ENCODE measurements at regions of chr5 and their contacts with region 1.

Region 1: GRCh38 chr5:39074016-39074886 is at the start of gene RICTOR:
- DNase-seq: peak; percentile 85 to 94 (median 91)
- ATAC-seq: peak; percentile 71
- H3K4me3 ChIP-seq: peak within 1 kb of the TSS; percentile 81 to 95
- H3K4me3 Mint-ChIP-seq: peak within 1 kb of the TSS; percentile 97
- H3K27ac ChIP-seq: peak within 1 kb of the TSS; percentile 92 to 94
- H3K27ac Mint-ChIP-seq: peak within 1 kb of the TSS; percentile 96
- H3K4me1 ChIP-seq: peaks cover 36% of the 10 kb centered on the region
- H3K4me1 Mint-ChIP-seq: peaks cover 46% of the 10 kb centered on the region
- H3K27me3 ChIP-seq: peaks cover 10 to 11% of the 10 kb centered on the region in 2 experiments
- H3K27me3 Mint-ChIP-seq: peaks cover 25% of the 10 kb centered on the region
- CTCF ChIP-seq: no peak
- total RNA-seq, gene RICTOR: 116 to 128 TPM

Region 2: GRCh38 chr5:37370864-37371726 is 1703.2 kb before region 1 on chr5 and contains the start of gene NUP155:
- CTCF ChIA-PET with region 1: no interaction called
- POLR2A ChIA-PET with region 1: no interaction called
- intact Hi-C with region 1: loop called in 1 of 2 experiments (anchors 10 kb)
- DNase-seq: peak; percentile 71 to 96 (median 88)
- ATAC-seq: peak; percentile 93
- H3K4me3 ChIP-seq: peak within 1 kb of the TSS; percentile 92 to 95
- H3K4me3 Mint-ChIP-seq: peak within 1 kb of the TSS; percentile 97
- H3K27ac ChIP-seq: peak within 1 kb of the TSS; percentile 88 to 93
- H3K27ac Mint-ChIP-seq: peak within 1 kb of the TSS; percentile 97
- H3K4me1 ChIP-seq: peaks cover 18% of the 10 kb centered on the region
- H3K4me1 Mint-ChIP-seq: peaks cover 32% of the 10 kb centered on the region
- H3K27me3 ChIP-seq: no peaks in the 10 kb centered on the region
- H3K27me3 Mint-ChIP-seq: no peaks in the 10 kb centered on the region
- CTCF ChIP-seq: no peak
- total RNA-seq, gene NUP155: 22.9 to 27.4 TPM

Region 3: DNA sequence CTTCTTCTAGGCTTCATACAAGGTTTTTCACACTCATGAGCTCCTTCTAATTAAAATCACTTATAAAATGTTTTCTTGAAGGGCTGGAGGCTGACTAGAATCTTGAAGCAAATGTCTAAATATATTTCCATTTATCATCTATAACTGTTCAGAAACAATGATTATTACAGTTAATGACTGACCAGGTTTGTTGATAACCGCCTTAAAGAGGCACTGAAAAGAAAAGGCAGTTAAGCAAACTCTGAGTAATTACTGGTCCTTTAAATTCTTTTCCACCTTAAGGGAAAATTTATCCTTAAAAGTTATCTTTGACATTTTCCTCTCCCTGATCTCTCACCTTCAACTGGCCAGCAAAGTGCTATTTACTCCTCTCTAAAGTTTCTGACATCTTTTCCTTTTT is 43.2 kb before region 1 on chr5:
- CTCF ChIA-PET with region 1: no interaction called
- POLR2A ChIA-PET with region 1: no interaction called
- intact Hi-C with region 1: no loop called
- DNase-seq: no peak
- ATAC-seq: no peak
- H3K4me3 ChIP-seq: no peak overlapping the region
- H3K4me3 Mint-ChIP-seq: no peak overlapping the region
- H3K27ac ChIP-seq: no peak overlapping the region
- H3K27ac Mint-ChIP-seq: peak overlapping the region; percentile 1
- H3K4me1 ChIP-seq: peaks cover 3% of the 10 kb centered on the region
- H3K4me1 Mint-ChIP-seq: peaks cover 50% of the 10 kb centered on the region
- H3K27me3 ChIP-seq: no peaks in the 10 kb centered on the region
- H3K27me3 Mint-ChIP-seq: no peaks in the 10 kb centered on the region
- CTCF ChIP-seq: no peak

Region 4: DNA sequence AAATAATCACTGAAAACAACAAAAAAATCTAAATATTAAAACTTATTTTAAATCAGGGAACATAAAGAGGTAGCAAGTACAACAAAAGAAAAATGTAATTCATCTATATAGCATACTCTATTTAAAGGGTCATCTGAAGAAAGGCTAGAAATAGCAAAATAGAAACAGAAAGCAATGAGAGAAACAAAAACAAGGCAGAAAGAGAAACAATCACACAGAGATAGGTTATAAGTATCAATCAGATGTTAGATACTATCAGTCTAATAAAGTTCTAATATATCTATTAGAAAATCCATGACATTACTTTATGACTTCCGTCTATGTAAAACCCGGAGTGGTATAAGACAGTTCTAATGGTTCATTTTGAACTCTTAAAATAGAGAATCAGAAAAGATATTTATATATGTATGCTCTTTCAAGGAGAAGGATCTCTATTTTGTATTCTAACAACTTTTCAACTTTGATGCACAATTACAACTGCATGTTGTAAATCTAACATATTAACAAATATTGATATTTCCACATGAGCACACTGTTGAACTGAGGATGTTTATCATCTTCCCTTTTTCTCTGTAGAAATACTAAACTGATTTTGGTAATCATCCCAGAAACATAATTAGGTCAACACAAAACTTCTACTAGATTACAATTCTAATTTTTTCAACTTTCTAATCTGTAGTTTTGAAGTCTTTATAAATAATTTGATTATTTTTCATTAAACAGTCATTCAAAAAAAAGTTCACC is 15.9 kb before region 1 on chr5:
- CTCF ChIA-PET with region 1: no interaction called
- POLR2A ChIA-PET with region 1: interaction called, 4 read pairs
- intact Hi-C with region 1: loop called in 1 of 2 experiments (anchors 2 kb)
- DNase-seq: no peak
- ATAC-seq: peak; percentile 31
- H3K4me3 ChIP-seq: peak overlapping the region in 1 of 2 experiments; percentile 20
- H3K4me3 Mint-ChIP-seq: peak overlapping the region; percentile 54
- H3K27ac ChIP-seq: peak overlapping the region in 1 of 2 experiments; percentile 19
- H3K27ac Mint-ChIP-seq: peak overlapping the region; percentile 86
- H3K4me1 ChIP-seq: peaks cover 54% of the 10 kb centered on the region
- H3K4me1 Mint-ChIP-seq: peaks cover 88% of the 10 kb centered on the region
- H3K27me3 ChIP-seq: no peaks in the 10 kb centered on the region
- H3K27me3 Mint-ChIP-seq: no peaks in the 10 kb centered on the region
- CTCF ChIP-seq: no peak

Region 5: DNA sequence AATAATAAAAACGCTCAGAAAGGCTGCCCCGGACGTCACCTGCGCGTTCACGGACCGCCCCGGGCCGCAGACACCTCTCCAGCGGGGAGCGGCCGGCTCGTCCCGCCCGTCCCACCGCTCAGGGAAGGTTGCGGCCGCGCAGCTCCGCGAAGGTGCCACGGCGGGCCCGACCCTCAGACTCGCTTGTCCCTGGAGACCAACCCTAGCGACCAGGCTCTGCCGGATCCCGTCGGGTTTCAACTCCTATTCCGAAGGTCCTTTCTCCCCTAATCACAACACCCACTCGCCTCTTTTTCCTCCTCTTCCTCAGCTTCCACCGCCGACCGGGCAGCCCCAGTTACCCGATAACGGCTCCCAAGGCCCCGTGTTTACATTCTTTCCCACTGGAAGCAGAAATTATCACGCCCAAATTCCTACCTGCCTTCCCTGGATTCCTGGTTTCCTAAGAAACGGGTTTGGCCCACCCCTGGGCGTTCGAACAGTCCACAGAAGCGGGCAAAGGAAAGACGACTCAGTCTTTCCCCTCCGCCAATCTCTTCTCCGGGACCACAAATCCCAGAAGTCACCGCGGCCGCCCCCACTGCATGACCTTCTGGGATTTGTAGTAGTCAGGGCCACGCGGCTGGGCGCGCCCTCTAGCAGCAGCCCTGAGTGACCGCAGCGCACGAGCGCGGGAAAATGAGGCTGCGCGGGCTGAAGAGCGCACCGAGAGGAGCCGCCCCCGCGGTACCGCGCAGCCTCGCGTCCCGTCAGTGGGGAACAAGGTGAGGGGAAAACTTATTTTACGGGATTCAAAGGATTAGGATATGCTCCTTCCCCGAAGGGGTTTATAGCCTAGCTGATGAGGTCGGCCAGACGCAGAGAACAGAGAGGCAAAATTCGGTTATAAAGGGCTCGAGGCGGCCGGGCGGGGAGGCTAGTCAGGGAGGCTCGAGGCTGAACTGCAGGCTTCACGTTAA is 1681.4 kb after region 1 on chr5 and contains the start of gene TTC33:
- CTCF ChIA-PET with region 1: no interaction called
- POLR2A ChIA-PET with region 1: no interaction called
- intact Hi-C with region 1: loop called in 1 of 2 experiments (anchors 10 kb)
- DNase-seq: peak; percentile 86 to 96 (median 94)
- ATAC-seq: peak; percentile 85
- H3K4me3 ChIP-seq: peak within 1 kb of the TSS; percentile 93 to 98
- H3K4me3 Mint-ChIP-seq: no peak within 1 kb of the TSS
- H3K27ac ChIP-seq: peak within 1 kb of the TSS; percentile 79 to 89
- H3K27ac Mint-ChIP-seq: no peak within 1 kb of the TSS
- H3K4me1 ChIP-seq: peaks cover 18% of the 10 kb centered on the region
- H3K4me1 Mint-ChIP-seq: peaks cover 24% of the 10 kb centered on the region
- H3K27me3 ChIP-seq: no peaks in the 10 kb centered on the region
- H3K27me3 Mint-ChIP-seq: no peaks in the 10 kb centered on the region
- CTCF ChIP-seq: peak; percentile 62
- total RNA-seq, gene TTC33: 6.7 to 7.1 TPM